ENCODE measurements at regions of chr9 and their contacts with region 1.

Region 1: DNA sequence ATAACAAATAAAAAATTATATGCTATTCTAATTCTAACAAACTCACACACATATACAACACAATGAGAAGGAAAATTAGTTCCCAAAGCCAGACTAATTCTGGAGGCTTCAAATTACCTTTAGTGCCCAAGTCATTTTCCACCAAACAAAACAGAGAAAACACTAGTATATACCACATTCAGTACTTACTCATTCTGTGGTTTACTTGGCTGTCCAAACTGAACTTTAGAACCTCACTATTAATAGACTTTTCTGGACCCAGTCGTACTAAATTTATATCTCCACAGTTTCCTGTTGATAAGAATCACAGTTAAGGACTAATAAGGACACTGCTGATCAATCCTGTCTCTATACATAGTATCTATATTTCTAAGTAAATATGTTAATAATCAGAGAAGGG is 66.4 kb downstream of the SETX start:
- DNase-seq: no peak
- H3K4me3 ChIP-seq: no peak overlapping the region
- H3K27ac ChIP-seq: no peak overlapping the region
- H3K4me1 ChIP-seq: no peaks in the 10 kb centered on the region
- H3K27me3 ChIP-seq: no peaks in the 10 kb centered on the region
- CTCF ChIP-seq: no peak

Region 2: GRCh38 chr9:131513177-131513576 is 775.2 kb before region 1 on chr9:
- intact Hi-C with region 1: no loop called
- DNase-seq: no peak
- H3K4me3 ChIP-seq: no peak overlapping the region
- H3K27ac ChIP-seq: no peak overlapping the region
- H3K4me1 ChIP-seq: no peaks in the 10 kb centered on the region
- H3K27me3 ChIP-seq: no peaks in the 10 kb centered on the region
- CTCF ChIP-seq: no peak

Region 3: DNA sequence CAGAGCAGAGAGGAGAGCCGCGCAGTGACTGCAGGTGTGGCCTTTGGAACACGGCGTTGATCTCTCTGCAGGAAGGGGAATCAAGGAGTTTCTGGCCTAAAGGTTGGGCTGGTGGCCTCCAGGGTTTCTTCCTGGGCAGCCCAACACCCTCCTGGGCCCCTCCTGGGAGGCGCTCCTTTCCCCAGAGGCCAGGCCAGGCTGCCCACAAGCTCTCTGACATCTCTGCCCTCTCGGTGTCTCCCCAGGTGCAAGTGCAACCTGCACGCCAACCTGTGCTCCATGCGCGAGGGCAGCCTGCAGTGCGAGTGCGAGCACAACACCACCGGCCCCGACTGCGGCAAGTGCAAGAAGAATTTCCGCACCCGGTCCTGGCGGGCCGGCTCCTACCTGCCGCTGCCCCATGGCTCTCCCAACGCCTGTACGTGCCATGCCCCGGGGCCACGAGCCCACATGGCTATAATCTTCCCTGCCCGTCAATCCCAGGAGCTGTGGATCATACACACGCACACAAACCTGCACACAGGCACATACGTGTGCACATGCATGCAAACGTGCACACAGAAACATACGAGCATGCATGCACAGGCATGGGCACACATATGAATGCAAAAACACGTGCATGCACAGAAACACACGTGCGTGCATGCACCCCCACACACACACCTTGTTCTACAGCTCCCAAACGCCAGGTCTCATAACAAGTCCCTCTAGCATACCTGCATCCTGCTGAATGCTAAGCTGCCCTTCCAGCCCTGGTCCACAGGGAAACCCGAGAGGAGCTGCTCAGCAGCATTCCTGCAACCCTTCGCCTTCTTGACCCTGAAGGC is 61.5 kb before region 1 on chr9:
- intact Hi-C with region 1: no loop called
- DNase-seq: no peak
- H3K4me3 ChIP-seq: no peak overlapping the region
- H3K27ac ChIP-seq: no peak overlapping the region
- H3K4me1 ChIP-seq: no peaks in the 10 kb centered on the region
- H3K27me3 ChIP-seq: peaks cover 3% of the 10 kb centered on the region
- CTCF ChIP-seq: no peak

Region 4: DNA sequence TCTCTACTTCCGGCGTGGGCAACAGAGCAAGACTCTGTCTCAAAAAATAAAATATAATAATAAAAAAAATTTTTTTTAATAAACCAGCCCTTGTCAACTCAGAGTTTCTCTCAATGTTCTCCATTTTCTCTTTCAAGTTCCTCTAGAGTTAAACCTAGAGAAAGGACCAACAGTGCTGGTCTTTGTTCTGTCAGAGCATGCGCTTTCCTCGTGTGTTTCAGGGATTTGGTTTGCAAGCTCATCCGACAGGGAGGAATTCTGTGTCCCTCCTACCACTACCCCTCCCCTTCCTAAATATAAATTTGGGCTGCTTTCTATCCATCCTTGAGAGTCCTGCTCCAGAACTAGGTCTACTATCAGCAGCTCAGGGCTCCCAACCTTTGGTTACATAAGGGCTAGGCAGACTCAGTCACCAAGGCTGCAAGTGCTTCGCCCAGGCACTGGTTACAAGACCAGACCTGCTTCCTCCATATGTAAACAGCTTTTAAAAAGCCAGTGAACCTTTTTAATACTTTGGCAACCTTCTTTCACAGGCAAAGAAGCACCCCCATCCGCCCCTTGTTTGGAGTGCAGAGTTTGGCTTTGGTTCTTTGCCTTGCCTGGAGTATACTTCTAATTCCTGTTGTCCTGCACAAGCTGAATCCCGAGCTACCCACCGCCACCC is 52.9 kb after region 1 on chr9:
- intact Hi-C with region 1: loop called (anchors 10 kb)
- DNase-seq: no peak
- H3K4me3 ChIP-seq: no peak overlapping the region
- H3K27ac ChIP-seq: no peak overlapping the region
- H3K4me1 ChIP-seq: no peaks in the 10 kb centered on the region
- H3K27me3 ChIP-seq: no peaks in the 10 kb centered on the region
- CTCF ChIP-seq: no peak

Region 5: DNA sequence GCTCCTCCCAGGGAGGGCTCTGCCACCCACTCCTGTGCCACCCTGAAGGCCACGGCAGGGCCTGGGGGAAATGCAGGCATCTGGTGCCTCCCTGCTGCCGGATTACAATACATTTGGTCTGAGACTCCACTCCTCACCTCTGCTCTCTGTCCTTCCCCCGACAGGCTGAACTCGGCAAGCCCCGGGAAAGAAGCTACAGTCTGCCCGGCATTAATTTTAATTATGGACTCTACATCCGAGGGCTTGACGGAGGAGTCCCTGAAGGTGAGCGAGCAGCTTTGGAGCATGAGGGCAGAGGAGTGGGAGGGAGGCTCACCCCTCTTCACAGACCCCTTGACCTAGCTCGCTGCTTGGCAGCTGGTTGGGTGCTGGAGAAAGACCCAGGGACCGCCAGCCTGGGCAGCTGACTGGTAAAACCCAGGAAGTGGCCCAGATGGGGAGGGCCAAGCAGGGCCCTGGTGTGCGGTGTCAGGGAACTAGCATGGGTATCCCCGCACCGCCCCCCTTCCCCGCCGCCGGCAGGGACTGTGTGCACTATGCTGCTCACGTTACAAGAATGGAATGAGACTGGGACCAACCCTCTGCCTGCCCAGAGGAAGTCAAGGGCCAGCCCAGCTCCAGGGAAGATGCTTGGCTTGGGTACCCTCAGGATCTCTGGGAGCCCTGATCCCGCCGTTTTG is 210.3 kb after region 1 on chr9:
- intact Hi-C with region 1: no loop called
- DNase-seq: no peak
- H3K4me3 ChIP-seq: no peak overlapping the region
- H3K27ac ChIP-seq: no peak overlapping the region
- H3K4me1 ChIP-seq: no peaks in the 10 kb centered on the region
- H3K27me3 ChIP-seq: no peaks in the 10 kb centered on the region
- CTCF ChIP-seq: no peak

Region 6: DNA sequence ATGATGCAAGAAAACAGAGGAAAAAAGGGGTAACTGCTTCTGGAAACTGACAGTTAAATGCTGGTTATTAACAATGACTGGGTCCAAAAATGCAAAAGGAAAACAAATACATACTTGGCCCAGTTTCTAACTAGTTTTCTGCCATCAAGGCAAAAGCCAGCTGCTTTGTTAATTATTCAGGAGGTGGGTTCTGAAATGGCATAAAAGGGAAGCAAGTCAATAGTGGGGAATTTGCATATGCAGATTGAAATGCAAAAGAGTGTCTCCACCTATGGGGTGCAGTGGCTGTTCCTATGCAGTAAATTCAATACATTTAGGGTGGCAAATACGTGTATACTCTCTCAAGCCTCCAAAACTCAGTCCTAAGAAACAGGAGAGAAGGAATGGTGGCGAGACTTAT is 327.4 kb after region 1 on chr9:
- intact Hi-C with region 1: no loop called
- DNase-seq: no peak
- H3K4me3 ChIP-seq: no peak overlapping the region
- H3K27ac ChIP-seq: no peak overlapping the region
- H3K4me1 ChIP-seq: no peaks in the 10 kb centered on the region
- H3K27me3 ChIP-seq: no peaks in the 10 kb centered on the region
- CTCF ChIP-seq: no peak